Posterior cingulate gyrus (tissue), 11 donors: ENCODE measurements at regions of chr20 and their contacts with region 1.

Region 1: DNA sequence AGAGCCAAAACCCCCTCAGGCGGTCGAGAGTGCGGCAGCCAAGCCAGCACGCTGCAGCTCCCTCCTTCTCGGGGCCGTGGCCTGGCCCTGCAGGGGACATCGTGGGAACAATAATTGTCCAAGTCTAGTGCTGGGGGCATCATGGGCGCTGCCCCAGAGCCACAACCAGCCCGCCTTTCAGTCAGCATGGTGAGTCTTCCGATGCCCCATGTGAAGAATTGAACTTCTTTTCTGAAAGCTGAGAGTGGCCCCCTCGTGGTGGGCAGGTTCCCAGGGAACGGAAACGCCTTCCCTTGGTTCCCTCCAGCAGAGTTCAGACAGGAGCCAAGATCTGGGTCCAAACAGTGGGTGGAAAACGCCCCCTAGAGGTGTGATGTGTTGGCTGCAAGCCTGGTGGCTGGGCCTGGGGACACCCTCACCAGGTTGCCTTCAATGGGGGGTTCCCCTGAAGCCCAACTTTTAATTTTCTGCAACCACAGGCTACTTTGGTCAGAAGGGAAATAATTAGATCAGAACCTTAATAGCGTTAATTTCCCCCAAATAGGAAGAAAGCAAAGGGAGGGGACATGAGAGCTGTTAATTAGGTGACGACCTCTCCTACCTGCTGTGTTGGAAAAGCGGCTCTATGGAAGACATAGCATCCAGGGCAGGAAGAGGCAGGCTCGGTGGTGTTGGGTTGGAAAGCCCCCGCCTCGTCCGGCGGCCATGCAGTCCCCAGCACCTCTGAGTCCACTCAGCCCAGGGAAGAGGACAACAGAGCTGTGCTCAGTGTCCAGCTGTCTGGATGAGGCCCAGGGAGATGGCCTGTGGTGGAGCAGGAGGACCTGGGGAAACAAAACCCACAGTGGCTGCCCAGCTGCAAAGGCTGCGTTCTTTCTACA is 4.7 kb upstream of the MRGBP start:
- DNase-seq: peak; percentile 81 to 98 (median 92)

Region 2: DNA sequence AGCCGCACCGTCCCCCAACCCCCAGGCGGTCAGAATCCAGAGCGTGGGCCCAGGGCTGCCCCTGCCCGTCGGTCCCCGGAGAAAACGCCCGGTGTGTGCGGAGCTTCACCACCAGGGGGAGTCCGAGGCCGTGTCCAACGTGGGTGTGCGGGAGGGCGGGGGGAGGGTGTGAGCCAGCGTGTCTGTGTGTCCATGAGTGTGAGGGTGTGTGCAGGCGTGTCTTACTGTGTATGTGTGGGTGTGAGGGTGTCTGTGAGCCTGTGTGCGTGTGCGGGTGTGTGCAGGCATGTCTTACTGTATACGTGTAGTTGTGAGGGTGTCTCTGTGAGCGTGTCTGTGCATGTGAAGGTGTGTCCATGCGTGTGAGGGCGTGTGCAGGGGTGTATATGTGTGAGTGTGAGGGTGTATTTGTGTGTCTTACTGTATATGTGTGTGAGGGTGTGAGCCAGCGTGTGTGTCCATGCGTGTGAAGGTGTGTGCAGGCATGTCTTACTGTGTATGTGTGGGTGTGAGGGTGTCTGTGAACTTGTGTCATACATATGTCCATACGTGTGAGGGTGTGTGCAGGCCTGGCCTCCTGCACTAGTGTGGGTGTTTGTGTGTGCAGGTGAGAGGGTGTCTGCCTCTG is 291.2 kb before region 1 on chr20:
- intact Hi-C with region 1: loop called (anchors 1 kb)
- DNase-seq: peak in 8 of 10 donors; percentile 66 to 93 (median 76)

Region 3: GRCh38 chr20:62668441-62669027 is 123.0 kb before region 1 on chr20:
- intact Hi-C with region 1: loop called (anchors 1 kb)
- DNase-seq: peak; percentile 67 to 97 (median 84)

Region 4: DNA sequence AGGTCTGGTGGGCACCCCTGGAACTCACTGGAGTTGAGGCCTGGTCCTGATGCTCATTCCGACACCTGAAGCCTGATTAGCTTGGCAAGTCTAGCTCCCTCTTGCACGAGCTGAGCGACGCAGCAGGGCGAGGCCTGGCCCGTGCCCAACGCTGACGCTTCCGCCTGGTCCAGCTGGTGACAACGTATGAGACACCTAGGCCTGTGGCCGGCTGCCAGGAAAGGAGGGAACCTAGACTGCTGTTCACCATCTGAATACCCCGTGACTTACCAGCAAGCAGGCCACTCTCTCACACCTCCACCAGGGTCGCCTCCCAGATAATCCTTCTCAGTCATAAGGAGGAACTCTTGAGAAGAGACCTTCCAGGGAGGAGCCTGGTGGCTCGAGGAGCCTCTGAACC is 399.9 kb after region 1 on chr20:
- intact Hi-C with region 1: no loop called
- DNase-seq: peak in 2 of 10 donors; percentile 76 to 88